Left cardiac atrium (tissue), 4 donors: ENCODE measurements at regions of chr7 and their contacts with region 1.

Region 1: DNA sequence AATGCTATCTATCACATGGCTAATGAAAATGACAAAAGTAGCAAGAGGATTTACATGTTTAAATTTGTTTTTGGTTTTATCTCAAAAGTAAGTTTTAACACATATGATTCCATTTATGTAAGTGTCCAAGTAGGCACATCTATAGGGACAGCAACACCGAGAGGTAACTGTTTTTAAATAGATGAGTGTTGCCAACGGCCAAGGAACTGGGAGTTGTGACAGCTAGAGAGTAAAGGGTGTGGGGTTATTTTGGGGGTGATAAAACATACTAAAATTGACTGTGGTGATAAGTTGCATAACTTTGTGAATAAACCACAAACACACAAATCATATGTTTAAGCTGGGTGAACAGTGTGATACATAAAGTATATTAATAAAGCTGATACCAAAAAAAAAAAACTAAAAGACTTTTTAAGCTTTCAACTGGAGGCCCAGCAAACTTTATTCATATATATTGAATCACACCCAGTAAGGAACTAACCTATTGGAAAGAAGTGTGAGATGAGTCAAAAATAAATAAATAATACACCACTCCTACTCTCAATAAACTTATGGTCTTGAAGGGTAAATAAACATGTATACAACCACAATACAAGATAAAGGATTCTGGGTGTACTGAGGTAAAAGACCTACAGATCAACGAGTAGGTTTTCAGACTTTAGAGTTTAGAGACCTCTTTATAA is 33.0 kb downstream of the LRRC72 start:
- DNase-seq: no peak
- ATAC-seq: peak in 1 of 2 donors; percentile 30

Region 2: DNA sequence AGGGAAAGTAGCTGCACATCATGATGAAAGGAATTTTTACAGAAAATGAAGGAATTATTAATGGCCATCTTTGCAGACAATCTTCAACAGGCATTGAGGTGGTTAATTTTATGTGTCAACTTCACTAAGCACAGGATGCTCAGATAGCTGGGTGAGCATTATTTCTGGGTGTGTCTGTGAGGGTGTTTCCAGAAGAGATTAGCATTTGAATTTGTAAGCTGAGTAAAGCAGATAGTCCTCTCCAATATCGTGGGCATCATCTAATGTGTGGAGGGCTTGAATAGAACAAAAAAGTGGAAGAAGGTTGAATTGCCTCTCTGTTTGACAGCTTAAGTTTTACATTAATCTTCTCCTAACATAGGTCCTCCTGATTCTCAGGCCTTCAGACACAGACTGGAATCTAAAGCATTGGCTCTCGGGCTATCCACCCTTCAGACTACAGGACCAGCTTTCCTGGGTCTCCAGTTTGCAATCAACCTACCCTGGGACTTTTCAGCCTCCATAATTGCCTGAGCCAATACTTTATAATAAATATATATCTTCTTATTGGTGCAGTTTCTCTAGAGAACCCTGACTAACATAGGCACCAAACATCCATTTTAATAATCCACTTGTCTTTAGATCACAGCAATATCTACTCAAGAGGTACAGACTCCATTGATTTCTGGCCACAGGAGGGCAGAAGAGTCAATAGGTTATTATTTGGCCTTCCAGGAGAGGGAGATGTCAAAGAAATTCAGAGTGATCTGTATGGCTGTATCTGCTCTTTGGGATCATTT is 127.8 kb before region 1 on chr7:
- intact Hi-C with region 1: loop called (anchors 2 to 10 kb)
- DNase-seq: no peak
- ATAC-seq: peak; percentile 58 to 76